Naive thymus-derived CD4-positive, alpha-beta T cell (primary cell): ENCODE measurements at regions of chr1 and their contacts with region 1.

Region 1: DNA sequence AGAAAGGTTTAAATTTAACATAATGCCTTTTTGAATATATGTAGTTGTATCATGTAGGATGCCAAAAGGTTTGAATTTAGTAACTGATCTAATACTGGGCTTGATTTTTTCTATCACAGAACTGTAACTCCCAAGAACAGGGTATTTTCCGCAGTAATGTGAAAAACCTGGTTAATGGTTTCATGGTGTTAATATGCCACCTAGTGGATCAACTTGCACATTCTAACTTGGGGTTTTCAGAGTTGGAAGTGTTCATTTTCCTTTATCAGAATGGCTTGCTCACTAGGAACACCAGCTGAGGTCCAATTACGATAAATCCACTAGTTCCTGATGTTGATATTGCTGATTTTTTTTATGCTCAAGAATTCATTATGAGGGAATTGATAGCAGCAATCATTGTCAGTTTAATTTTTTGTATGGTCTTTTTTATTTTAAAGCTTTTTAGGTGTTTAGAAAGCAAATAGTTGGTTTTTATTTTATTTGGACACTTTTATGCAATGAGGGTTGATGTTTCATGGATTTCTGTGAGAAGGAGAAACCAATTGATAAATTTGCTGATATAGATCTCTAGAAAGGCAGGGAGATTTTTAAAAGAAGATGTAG is 157.2 kb downstream of the PLA2G4A start:
- DNase-seq: peak in 5 of 9 donors; percentile 25 to 39 (median 36)
- ATAC-seq: peak; percentile 58
- H3K4me3 ChIP-seq: no peak overlapping the region
- H3K4me3 Mint-ChIP-seq: no peak overlapping the region
- H3K27ac ChIP-seq: no peak overlapping the region
- H3K27ac Mint-ChIP-seq: no peak overlapping the region
- H3K4me1 ChIP-seq: no peaks in the 10 kb centered on the region
- H3K4me1 Mint-ChIP-seq: no peaks in the 10 kb centered on the region
- H3K27me3 ChIP-seq: no peaks in the 10 kb centered on the region
- H3K27me3 Mint-ChIP-seq: peaks cover 0 to 23% (median 3%) of the 10 kb centered on the region in 5 donors

Region 2: DNA sequence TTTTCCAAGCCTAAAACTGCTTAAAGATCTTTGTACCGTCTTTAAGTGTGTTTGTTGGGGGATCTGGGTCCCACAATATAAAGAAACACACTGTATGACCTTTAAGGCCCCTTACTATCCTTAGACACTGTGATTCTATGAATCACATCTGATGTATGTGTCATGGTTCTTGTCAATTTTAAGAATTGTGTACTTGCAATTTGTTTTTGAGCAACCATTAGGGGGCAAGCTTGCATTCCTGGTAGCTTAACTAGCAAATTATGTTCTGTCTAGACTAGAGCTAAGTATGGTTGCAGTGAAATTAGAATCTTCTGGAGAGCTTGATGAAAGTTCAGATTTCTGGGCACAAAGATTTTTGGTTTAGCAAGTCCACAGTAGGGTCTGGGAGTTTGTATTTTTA is 830.4 kb before region 1 on chr1:
- CTCF ChIA-PET with region 1: no interaction called
- POLR2A ChIA-PET with region 1: no interaction called
- intact Hi-C with region 1: loop called in 1 of 2 experiments (anchors 2 kb)
- DNase-seq: peak in 3 of 9 donors; percentile 2 to 4 (median 2)
- ATAC-seq: peak; percentile 37
- H3K4me3 ChIP-seq: no peak overlapping the region
- H3K4me3 Mint-ChIP-seq: no peak overlapping the region
- H3K27ac ChIP-seq: no peak overlapping the region
- H3K27ac Mint-ChIP-seq: no peak overlapping the region
- H3K4me1 ChIP-seq: no peaks in the 10 kb centered on the region
- H3K4me1 Mint-ChIP-seq: no peaks in the 10 kb centered on the region
- H3K27me3 ChIP-seq: no peaks in the 10 kb centered on the region
- H3K27me3 Mint-ChIP-seq: peaks cover 4 to 13% (median 8%) of the 10 kb centered on the region in 5 donors

Region 3: GRCh38 chr1:186404454-186405051 is 581.4 kb before region 1 on chr1:
- CTCF ChIA-PET with region 1: no interaction called
- POLR2A ChIA-PET with region 1: no interaction called
- intact Hi-C with region 1: loop called (anchors 1 kb)
- DNase-seq: peak in 7 of 9 donors; percentile 26 to 61 (median 40)
- ATAC-seq: peak; percentile 95
- H3K4me3 ChIP-seq: no peak overlapping the region
- H3K4me3 Mint-ChIP-seq: no peak overlapping the region
- H3K27ac ChIP-seq: no peak overlapping the region
- H3K27ac Mint-ChIP-seq: peak overlapping the region in 5 of 9 donors; percentile 41 to 78 (median 51)
- H3K4me1 ChIP-seq: no peaks in the 10 kb centered on the region
- H3K4me1 Mint-ChIP-seq: peaks cover 0 to 10% (median 0%) of the 10 kb centered on the region in 7 donors
- H3K27me3 ChIP-seq: no peaks in the 10 kb centered on the region
- H3K27me3 Mint-ChIP-seq: no peaks in the 10 kb centered on the region

Region 4: DNA sequence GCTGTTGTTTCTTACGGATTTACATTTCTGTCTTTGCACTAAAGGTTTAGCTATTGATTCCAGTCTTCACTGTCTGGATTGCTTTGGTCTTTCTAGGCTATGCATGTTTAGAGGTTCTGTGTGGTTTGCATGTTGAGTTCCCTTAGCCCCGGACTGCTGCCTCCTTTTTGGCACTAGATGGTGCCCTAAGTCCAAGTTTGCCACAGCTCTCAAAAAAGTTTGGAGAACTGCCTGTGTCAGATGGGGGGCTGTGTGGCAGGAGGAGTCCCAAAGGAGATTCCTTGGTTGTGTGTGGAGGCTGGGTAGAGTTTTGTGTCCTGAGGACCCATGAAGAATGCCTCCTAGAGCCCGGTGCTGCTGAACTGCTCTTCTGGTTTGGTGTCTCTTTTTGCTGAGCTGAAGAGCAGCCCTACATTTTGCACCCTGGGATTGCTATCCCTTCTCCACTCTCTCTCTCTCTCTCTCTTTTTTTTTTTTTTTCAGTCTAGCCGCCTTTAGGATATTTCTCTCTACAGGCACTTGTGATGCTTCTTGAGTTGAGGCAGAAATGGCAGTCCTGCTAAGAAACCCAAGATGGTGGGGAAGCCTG is 380.1 kb before region 1 on chr1:
- CTCF ChIA-PET with region 1: interaction called, 5 read pairs
- POLR2A ChIA-PET with region 1: no interaction called
- intact Hi-C with region 1: loop called in 1 of 2 experiments (anchors 1 kb)
- DNase-seq: peak in 4 of 9 donors; percentile 6 to 36 (median 18)
- ATAC-seq: peak; percentile 54
- H3K4me3 ChIP-seq: no peak overlapping the region
- H3K4me3 Mint-ChIP-seq: no peak overlapping the region
- H3K27ac ChIP-seq: no peak overlapping the region
- H3K27ac Mint-ChIP-seq: no peak overlapping the region
- H3K4me1 ChIP-seq: no peaks in the 10 kb centered on the region
- H3K4me1 Mint-ChIP-seq: no peaks in the 10 kb centered on the region
- H3K27me3 ChIP-seq: no peaks in the 10 kb centered on the region
- H3K27me3 Mint-ChIP-seq: peaks cover 14 to 64% (median 35%) of the 10 kb centered on the region in 5 donors